GM12878 (cell line): ENCODE measurements at regions of chr13 and their contacts with region 1.

Region 1: DNA sequence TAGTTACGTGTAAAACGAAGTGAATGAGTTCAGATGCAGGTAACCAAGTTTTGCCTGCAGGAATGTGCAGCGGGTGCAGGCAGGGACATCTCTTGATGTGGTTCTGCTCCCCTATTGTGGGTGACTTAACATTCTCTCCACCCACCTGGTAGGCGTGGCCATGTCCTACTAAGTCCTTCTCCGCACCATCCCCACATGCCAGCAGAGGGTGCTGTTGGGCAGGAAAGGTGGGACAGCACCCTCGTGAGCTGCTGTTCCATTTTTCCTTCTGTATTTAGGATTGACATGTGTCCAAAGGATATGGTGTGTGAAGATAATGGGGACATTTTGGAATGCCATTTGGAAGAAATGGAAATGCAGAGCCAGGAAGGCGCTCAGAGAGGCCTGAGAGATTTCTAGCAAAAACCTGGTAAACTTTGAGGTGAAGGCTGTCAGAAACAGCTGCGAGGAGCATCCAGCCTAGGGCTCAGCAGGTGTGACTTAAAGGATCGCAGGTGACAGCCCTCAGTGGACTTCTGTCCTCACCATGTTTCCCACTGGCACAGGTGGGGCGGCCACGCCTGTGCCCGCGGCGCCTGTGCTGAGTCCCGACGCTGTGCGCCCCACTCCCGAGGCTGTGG is 26.2 kb upstream of the MCF2L start:
- DNase-seq: peak; percentile 71
- ATAC-seq: peak; percentile 100
- H3K4me3 ChIP-seq: peak overlapping the region; percentile 22
- H3K27ac ChIP-seq: no peak overlapping the region
- H3K4me1 ChIP-seq: peaks cover 4% of the 10 kb centered on the region; the same call in 1 of the 2 replicates
- H3K27me3 ChIP-seq: no peaks in the 10 kb centered on the region; a peak in 1 of 4 replicates
- CTCF ChIP-seq: peak; percentile 95 to 99 (median 99); a peak in 5 of 6 replicates
- EP300 ChIP-seq: no peak
- POLR2A ChIP-seq: no peak
- RAD21 ChIP-seq: peak; percentile 97

Region 2: DNA sequence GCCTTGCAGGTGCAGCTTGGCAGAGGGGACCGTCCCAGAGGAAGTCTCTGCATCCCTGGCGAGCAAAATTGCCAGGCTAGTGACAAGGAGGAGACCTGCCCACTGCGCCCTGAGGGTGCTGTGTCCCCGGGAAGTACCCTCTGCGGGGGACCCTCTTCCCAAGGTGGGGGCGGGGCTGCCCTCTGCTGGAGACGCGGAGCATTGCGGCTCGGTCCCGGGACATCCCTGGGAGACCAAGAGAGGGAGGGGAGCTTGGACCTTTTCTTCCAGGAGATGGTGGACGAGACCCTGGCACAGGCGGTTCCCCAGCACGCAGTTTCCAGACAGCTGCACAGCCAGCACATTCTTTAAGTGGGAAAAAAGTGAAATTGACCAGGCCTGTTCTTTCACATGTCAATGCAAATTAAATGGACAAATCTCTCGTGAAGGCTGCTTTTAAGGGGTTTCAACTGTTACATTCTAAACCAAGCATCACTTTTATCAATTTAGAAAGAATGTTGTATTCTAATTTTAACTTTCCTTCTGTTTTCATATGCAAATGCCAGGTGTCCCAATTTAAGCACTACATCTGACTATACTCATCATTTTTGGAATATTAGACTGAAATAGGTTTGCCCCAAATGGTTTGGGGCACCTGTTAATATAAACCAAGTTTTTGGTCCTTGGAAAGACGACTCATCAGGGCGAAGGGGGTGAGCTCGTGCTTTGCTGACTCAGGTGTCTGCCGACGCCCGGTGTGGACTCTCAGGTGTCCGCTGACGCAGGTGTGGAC is 86.9 kb after region 1 on chr13:
- CTCF ChIA-PET with region 1: interaction called, 7 read pairs
- POLR2A ChIA-PET with region 1: no interaction called
- RAD21 ChIA-PET with region 1: no interaction called
- SMC1A ChIA-PET with region 1: no interaction called
- in situ Hi-C with region 1: no loop called
- intact Hi-C with region 1: loop called (anchors 1 kb)
- DNase-seq: no peak
- ATAC-seq: peak; percentile 66
- H3K4me3 ChIP-seq: no peak overlapping the region
- H3K27ac ChIP-seq: no peak overlapping the region
- H3K4me1 ChIP-seq: no peaks in the 10 kb centered on the region
- H3K27me3 ChIP-seq: no peaks in the 10 kb centered on the region; a peak in 2 of 4 replicates
- CTCF ChIP-seq: peak; percentile 60 to 90 (median 70)
- EP300 ChIP-seq: no peak
- POLR2A ChIP-seq: no peak
- RAD21 ChIP-seq: peak; percentile 47

Region 3: DNA sequence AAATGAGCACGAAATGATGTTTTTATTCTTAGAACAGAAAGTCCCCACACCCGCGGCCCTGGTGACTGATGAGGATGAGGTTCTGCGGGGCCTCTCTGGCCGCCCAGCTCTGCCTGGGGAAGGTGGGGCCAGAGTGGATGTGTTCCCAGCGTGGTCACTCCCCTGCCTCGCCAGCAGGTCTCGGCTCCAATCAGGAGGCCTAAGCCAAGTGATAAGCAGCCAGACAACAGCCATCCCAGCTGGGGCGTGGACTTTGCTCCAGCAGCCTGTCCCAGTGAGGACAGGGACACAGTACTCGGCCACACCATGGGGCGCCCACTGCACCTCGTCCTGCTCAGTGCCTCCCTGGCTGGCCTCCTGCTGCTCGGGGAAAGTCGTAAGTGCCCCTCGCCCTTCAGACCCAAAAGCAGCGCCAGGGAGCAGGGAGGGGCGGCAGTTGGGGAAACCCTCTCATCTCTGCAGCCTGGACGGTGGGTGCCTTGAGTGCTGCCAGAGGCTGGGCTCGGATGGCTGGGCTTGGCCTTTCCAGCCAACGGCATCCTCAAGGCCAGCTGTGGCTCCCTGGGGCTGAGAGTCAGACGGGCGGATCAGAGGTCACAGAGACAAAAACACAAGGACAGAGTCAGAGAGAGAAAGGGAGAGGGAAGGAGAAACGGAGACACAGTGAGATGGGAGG is 179.9 kb after region 1 on chr13 and contains the start of gene F10:
- CTCF ChIA-PET with region 1: no interaction called
- POLR2A ChIA-PET with region 1: no interaction called
- RAD21 ChIA-PET with region 1: interaction called, 3 read pairs
- SMC1A ChIA-PET with region 1: no interaction called
- in situ Hi-C with region 1: no loop called
- intact Hi-C with region 1: loop called (anchors 10 kb)
- DNase-seq: no peak
- ATAC-seq: no peak
- H3K4me3 ChIP-seq: no peak within 1 kb of the TSS
- H3K27ac ChIP-seq: no peak within 1 kb of the TSS
- H3K4me1 ChIP-seq: no peaks in the 10 kb centered on the region
- H3K27me3 ChIP-seq: no peaks in the 10 kb centered on the region
- CTCF ChIP-seq: no peak
- EP300 ChIP-seq: no peak
- POLR2A ChIP-seq: no peak
- RAD21 ChIP-seq: no peak
- polyA plus RNA-seq, gene F10: not detected

Region 4: DNA sequence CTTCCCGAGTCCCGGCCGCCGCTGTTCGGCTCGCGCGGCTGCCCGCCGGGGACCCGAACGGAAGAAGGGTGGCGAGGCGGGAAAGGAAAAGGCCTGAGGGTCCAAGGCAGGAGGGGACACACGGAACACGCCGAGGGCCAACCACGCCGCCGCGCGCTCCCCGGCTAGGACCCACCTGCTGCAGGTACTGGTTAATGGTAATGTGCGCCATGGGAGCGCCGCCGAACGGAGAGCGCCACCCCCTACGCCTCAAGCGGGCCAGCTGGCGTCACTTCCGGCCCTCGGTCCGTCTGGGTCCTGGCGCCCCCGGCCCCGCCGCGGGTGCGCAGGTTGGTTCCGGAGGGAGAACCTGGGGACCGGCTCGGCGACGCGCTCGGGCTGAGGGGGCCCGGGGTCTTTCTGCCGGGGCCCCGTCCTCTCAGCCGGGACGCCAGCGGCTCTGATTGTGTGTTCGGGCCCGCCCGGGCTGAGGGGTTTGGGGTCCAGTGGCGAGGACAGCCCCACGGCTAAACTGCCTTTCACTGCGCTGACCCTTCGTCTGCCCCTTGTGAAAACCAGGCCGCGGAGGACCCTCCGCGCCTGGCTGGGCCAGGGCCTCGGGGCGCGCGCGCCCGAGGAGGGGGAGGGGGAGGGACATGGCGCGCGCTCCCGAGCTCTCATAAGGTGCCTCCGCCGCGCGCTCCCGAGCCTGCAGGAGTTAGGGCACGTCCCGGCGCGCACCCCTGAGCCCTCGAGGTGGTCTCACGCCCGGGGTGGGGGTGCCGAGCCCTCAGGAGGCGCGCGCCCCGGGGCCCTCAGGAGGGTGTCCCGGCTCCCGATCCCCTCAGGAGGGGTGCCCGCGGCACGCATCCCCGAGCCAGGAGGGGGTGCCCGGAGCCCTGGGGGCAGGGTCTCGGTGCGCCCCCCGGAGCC is 265.9 kb after region 1 on chr13 and contains the start of gene PCID2:
- CTCF ChIA-PET with region 1: no interaction called
- POLR2A ChIA-PET with region 1: no interaction called
- RAD21 ChIA-PET with region 1: no interaction called
- SMC1A ChIA-PET with region 1: no interaction called
- in situ Hi-C with region 1: no loop called
- intact Hi-C with region 1: loop called (anchors 10 kb)
- DNase-seq: peak; percentile 48
- ATAC-seq: peak; percentile 85
- H3K4me3 ChIP-seq: peak within 1 kb of the TSS; percentile 87
- H3K27ac ChIP-seq: peak within 1 kb of the TSS; percentile 95
- H3K4me1 ChIP-seq: peaks cover 6% of the 10 kb centered on the region
- H3K27me3 ChIP-seq: no peaks in the 10 kb centered on the region
- CTCF ChIP-seq: 0 out of 6 replicates have a peak, but pooled peaks of 1 of the 3 experiments have one; percentile 2
- EP300 ChIP-seq: no peak
- POLR2A ChIP-seq: peak; percentile 89
- RAD21 ChIP-seq: no peak
- polyA plus RNA-seq, gene PCID2: 65.4 to 71.8 TPM

Region 5: DNA sequence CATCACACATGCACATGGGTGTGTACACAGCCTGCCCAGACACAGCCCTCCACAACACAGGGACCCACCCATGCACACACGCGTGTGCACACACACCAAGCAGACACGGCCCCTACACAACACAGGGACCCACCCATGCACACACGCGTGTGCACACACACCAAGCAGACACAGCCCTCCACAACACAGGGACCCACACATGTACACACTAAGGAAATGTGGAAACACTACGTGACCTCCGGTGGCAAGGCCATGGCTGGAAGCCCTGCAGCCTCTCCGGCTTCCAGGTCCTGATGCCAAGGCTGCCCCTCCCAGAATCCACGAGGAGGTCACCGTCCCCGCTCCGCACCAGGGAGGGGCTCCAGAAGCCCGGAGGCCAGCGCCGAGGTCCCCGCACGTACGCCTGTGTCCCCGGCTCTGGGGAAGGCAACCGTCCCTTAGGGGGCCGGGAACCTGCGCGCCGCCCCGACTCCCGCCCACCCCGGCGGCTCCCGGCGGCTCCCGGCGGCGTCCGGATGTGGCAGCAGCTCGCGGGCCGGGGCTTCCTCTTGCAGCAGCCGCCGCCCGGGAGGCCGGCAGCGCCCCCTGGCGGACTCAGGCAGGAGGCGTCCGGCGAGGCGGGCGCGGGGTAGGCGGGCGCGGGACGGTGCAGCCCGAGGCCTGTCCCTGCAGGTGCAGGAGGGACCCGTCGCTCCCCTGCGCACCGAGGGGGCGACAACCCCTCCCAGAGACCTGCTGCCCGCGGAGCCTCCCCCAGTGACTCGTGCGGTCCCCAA is 451.0 kb after region 1 on chr13:
- CTCF ChIA-PET with region 1: interaction called, 16 read pairs
- POLR2A ChIA-PET with region 1: no interaction called
- RAD21 ChIA-PET with region 1: interaction called, 9 read pairs
- SMC1A ChIA-PET with region 1: interaction called, 3 read pairs
- in situ Hi-C with region 1: loop called (anchors 5 kb)
- intact Hi-C with region 1: loop called (anchors 1 kb)
- DNase-seq: peak; percentile 1
- ATAC-seq: peak; percentile 99
- H3K4me3 ChIP-seq: peak overlapping the region; percentile 87
- H3K27ac ChIP-seq: peak overlapping the region; percentile 9; the same call in 1 of the 2 replicates
- H3K4me1 ChIP-seq: no peaks in the 10 kb centered on the region
- H3K27me3 ChIP-seq: no peaks in the 10 kb centered on the region
- CTCF ChIP-seq: peak; percentile 66 to 77 (median 66); a peak in 5 of 6 replicates
- EP300 ChIP-seq: no peak
- POLR2A ChIP-seq: peak; percentile 50; the same call in 1 of the 2 replicates
- RAD21 ChIP-seq: peak; percentile 81

Region 6: DNA sequence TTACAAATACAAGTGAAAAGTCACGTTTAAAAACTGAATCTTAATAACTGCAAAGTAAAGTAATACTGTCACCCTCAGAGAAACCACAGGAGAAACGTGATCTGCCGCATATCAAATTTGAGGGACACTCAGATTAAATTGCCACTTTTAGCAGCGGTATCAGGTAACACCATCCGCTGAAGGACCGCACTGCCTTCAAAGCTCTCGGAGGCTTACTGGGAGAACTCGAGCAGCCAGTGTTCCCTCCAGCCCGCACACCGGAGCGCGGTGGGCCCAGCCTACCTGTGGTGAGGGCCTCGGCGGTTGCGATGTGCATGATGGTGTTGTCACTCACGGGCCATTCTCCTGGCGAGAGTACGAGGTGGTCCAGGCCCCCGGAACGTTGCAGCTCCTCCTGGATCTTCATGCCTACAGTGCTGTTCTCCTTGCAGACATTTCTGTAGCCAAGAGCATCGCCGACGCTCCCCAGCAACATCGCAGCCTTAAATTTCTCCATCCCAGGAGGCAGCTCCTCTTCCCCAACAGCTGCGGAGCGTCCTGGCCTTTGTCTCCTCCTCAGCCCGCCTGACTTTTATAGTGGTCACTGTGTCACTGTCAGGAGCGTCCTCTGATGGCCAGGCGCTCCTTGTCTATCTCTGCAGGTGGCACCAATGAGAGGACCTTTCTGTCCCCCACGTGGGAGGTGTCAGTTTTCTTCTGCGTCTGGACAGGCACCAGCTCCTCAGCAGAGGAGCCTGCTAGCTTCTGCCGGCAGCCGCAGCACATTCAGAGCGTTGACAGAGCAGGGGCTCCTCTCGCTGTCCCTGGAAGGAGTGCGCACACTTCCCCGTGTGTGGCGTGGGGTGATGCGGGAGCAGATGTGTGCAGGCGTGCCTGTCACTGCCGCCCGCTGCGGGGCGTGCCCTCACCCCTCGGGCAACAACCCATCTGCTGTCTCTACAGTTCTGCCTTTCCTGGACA is 510.4 kb after region 1 on chr13 and contains the start of gene ADPRHL1:
- CTCF ChIA-PET with region 1: interaction called, 9 read pairs
- POLR2A ChIA-PET with region 1: no interaction called
- RAD21 ChIA-PET with region 1: interaction called, 3 read pairs
- SMC1A ChIA-PET with region 1: no interaction called
- in situ Hi-C with region 1: no loop called
- intact Hi-C with region 1: loop called (anchors 5 kb)
- DNase-seq: no peak
- ATAC-seq: no peak
- H3K4me3 ChIP-seq: no peak within 1 kb of the TSS
- H3K27ac ChIP-seq: no peak within 1 kb of the TSS
- H3K4me1 ChIP-seq: no peaks in the 10 kb centered on the region
- H3K27me3 ChIP-seq: no peaks in the 10 kb centered on the region
- CTCF ChIP-seq: no peak
- EP300 ChIP-seq: no peak
- POLR2A ChIP-seq: no peak
- RAD21 ChIP-seq: no peak
- polyA plus RNA-seq, gene ADPRHL1: 0.10 to 0.13 TPM

Region 7: DNA sequence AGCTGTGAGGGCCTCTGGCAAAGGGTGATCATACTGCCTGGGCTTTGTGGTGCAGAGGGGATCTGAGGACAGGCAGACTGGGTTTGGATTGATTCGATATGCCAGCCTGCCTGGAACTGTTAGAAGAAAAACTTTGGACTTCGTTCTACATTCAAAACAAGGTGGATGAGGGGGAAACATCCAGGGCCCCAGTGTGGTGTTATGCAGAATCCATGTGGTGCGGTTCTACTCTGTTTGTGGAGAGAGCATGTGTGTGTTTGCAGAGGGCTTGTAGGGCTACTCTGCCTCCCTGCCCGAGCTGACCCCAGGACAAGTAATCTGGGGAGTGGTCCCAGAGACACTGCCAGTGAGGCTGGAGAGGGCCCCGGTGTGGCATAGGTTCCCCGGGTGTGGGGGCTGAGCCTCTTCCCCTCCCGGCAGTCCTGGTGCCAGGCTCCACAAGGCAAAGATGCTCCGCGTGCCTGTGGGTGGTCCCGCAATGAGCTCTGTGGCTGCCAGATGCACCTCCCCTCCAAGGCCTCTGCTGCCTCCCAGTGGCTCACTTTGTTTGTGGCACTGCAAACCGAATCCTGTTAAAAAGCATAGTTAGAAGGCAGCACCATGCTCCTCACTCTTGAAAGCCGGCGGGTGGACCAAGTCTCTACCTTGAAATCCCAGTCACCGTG is 619.4 kb after region 1 on chr13:
- CTCF ChIA-PET with region 1: interaction called, 4 read pairs
- POLR2A ChIA-PET with region 1: no interaction called
- RAD21 ChIA-PET with region 1: interaction called, 4 read pairs
- SMC1A ChIA-PET with region 1: no interaction called
- in situ Hi-C with region 1: no loop called
- intact Hi-C with region 1: loop called (anchors 2 kb)
- DNase-seq: no peak
- ATAC-seq: peak; percentile 92
- H3K4me3 ChIP-seq: no peak overlapping the region
- H3K27ac ChIP-seq: no peak overlapping the region
- H3K4me1 ChIP-seq: no peaks in the 10 kb centered on the region
- H3K27me3 ChIP-seq: no peaks in the 10 kb centered on the region
- CTCF ChIP-seq: peak; percentile 65 to 80 (median 75)
- EP300 ChIP-seq: no peak
- POLR2A ChIP-seq: no peak
- RAD21 ChIP-seq: peak; percentile 71